Activated CD4-positive, alpha-beta T cell treated with anti-CD3 and anti-CD28 coated beads for 36 hours (primary cell): ENCODE measurements at regions of chr22 and their contacts with region 1.

Region 1: DNA sequence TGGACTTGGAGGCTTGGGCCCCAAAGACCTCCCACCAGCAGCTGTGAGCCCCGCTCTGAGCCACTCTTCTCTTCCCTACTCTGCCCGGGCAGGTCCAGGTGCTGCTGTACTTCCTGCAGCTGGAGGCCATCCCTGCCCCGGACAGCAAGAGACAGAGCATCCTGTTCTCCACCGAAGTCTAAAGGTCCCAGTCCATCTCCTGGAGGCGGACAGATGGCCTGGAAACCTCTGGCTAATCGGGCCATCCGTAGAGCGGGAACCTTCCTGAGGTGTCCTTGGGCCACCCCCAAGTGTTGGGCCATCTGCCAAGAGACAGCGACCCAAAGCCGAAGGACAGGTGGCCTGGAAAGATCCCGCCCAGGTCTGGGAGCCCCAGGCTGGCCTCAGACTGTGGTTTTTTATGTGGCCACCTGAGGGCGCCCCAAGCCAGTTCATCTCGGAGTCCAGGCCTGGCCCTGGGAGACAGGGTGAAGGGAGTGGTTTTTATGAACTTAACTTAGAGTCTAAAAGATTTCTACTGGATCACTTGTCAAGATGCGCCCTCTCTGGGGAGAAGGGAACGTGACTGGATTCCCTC is 135.1 kb downstream of the BCR start:
- DNase-seq: peak; percentile 65
- ATAC-seq: no peak
- H3K4me3 Mint-ChIP-seq: no peak overlapping the region
- H3K27ac Mint-ChIP-seq: no peak overlapping the region
- H3K4me1 Mint-ChIP-seq: no peaks in the 10 kb centered on the region
- H3K27me3 Mint-ChIP-seq: no peaks in the 10 kb centered on the region

Region 2: DNA sequence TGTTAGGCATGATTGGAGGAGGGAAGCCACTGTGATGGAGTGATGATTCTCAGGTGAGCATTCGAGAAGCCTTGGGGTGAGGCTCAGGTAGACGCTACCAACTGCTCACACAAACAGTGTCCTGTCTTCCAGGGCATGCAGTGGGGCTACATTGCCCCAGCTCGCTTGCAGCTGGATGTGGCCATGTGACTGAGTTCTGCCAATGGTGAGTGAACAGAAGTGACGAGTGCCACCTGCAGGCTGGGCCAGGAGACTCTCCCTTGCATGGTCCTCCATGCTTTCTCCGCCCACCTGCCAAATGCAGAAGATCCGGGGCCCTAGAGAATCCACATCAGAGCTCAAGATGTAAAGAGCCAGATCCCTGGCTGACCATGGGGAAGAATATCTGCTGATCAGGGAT is 60.8 kb after region 1 on chr22:
- CTCF ChIA-PET with region 1: no interaction called
- POLR2A ChIA-PET with region 1: no interaction called
- intact Hi-C with region 1: loop called in 1 of 2 experiments (anchors 1 kb)
- DNase-seq: peak; percentile 78
- ATAC-seq: peak; percentile 95
- H3K4me3 Mint-ChIP-seq: no peak overlapping the region
- H3K27ac Mint-ChIP-seq: no peak overlapping the region
- H3K4me1 Mint-ChIP-seq: no peaks in the 10 kb centered on the region
- H3K27me3 Mint-ChIP-seq: peaks cover 3% of the 10 kb centered on the region